B cell (primary cell): ENCODE measurements at regions of chr2 and their contacts with region 1.

Region 1: DNA sequence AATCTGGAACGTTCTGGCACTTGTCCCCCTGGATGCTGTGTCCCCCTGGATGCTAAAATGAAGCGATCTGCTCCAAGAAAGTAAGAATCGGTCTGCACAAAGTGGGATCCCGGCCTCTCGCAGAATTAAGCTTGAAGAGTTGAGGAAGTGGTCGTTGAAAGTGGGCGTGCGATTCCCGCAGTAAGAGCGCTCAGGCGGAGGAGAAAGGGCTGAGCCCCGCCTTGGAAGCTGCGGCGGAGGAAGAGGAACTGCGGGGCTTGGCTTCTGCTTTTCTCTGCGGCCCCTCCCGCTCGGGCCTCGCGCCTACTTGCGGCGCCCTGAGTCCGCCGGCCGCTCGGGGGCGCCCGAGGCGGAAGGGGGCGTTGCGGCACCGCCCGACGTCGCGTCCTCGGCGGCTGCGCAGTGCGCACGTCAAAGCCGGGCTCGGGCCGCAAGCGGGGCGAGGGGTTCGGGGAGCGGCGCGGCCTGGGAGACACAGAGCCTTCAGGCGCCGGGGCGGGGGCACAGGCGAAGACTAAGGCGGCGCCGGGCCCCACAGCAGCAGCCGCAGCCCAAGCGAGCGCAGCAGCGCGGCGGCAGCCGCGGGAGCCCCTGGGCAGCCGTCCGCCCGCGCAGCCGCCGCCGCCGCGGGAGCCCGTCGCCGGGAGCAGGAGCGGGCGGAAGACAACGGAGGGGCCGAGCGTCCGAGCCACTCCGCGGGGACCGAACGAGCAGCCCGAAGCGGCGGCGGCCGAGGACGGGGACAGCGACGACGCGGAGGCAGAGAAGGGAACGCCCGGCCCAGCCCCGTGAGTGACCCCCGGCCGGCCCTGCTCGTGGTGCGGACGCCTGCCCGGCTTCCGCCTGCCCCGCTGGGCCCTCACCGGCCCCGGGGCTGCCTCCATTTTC is at the start of gene CAB39:
- DNase-seq: peak; percentile 96
- ATAC-seq: peak; percentile 91
- H3K4me3 ChIP-seq: peak within 1 kb of the TSS; percentile 68 to 89 (median 78)
- H3K4me3 Mint-ChIP-seq: peak within 1 kb of the TSS; percentile 93
- H3K27ac ChIP-seq: peak within 1 kb of the TSS; percentile 59 to 84
- H3K27ac Mint-ChIP-seq: peak within 1 kb of the TSS; percentile 94
- H3K4me1 ChIP-seq: peaks cover 41% of the 10 kb centered on the region in 2 donors
- H3K4me1 Mint-ChIP-seq: peaks cover 48% of the 10 kb centered on the region
- H3K27me3 ChIP-seq: no peaks in the 10 kb centered on the region
- H3K27me3 Mint-ChIP-seq: no peaks in the 10 kb centered on the region
- CTCF ChIP-seq: peak; percentile 83
- total RNA-seq, gene CAB39: 72.5 and 75.7 TPM in 2 replicates

Region 2: DNA sequence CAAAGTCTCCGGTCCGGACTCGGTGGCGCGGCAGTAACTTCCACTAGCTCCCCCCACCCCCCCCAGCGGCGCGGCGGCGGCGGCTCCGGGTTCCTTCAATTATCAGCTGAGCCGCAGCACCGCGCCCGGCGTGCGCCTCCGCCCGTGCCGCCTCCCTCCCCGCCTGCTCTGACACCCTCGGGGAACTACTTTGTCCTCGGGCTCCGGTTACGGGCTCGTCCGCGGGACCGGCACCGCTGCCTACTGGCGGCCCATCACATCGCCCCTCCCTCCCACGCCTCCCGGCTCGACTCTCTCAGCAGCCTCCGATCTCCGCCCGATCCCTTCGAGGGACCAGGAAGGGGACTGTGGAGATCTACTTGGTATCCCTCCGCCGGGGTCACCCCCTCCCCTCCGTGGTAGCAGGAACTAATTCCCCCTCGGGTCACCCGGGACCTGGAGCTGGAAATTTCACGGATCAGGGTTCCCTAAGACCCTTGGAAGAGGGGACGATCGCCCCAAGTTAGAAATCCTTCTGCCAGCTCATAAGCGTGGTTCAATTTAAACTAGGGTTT is 790.7 kb before region 1 on chr2 and contains the start of gene TRIP12:
- CTCF ChIA-PET with region 1: no interaction called
- POLR2A ChIA-PET with region 1: no interaction called
- intact Hi-C with region 1: loop called (anchors 5 kb)
- DNase-seq: peak; percentile 99
- ATAC-seq: peak; percentile 75
- H3K4me3 ChIP-seq: peak within 1 kb of the TSS; percentile 83 to 98 (median 93)
- H3K4me3 Mint-ChIP-seq: peak within 1 kb of the TSS; percentile 96
- H3K27ac ChIP-seq: peak within 1 kb of the TSS; percentile 83 to 98
- H3K27ac Mint-ChIP-seq: peak within 1 kb of the TSS; percentile 97
- H3K4me1 ChIP-seq: peaks cover 20 to 24% of the 10 kb centered on the region in 2 donors
- H3K4me1 Mint-ChIP-seq: peaks cover 39% of the 10 kb centered on the region
- H3K27me3 ChIP-seq: no peaks in the 10 kb centered on the region
- H3K27me3 Mint-ChIP-seq: no peaks in the 10 kb centered on the region
- CTCF ChIP-seq: no peak
- total RNA-seq, gene TRIP12: 254 and 274 TPM in 2 replicates

Region 3: GRCh38 chr2:230202430-230203109 is 510.1 kb before region 1 on chr2:
- CTCF ChIA-PET with region 1: interaction called, 3 read pairs
- POLR2A ChIA-PET with region 1: interaction called, 3 read pairs
- intact Hi-C with region 1: loop called (anchors 5 kb)
- DNase-seq: peak; percentile 79
- ATAC-seq: peak; percentile 61
- H3K4me3 ChIP-seq: no peak overlapping the region
- H3K4me3 Mint-ChIP-seq: peak overlapping the region; percentile 74
- H3K27ac ChIP-seq: peak overlapping the region; percentile 9 to 72
- H3K27ac Mint-ChIP-seq: peak overlapping the region; percentile 87
- H3K4me1 ChIP-seq: peaks cover 51 to 55% of the 10 kb centered on the region in 2 donors
- H3K4me1 Mint-ChIP-seq: peaks cover 39% of the 10 kb centered on the region
- H3K27me3 ChIP-seq: no peaks in the 10 kb centered on the region
- H3K27me3 Mint-ChIP-seq: no peaks in the 10 kb centered on the region
- CTCF ChIP-seq: peak; percentile 64

Region 4: DNA sequence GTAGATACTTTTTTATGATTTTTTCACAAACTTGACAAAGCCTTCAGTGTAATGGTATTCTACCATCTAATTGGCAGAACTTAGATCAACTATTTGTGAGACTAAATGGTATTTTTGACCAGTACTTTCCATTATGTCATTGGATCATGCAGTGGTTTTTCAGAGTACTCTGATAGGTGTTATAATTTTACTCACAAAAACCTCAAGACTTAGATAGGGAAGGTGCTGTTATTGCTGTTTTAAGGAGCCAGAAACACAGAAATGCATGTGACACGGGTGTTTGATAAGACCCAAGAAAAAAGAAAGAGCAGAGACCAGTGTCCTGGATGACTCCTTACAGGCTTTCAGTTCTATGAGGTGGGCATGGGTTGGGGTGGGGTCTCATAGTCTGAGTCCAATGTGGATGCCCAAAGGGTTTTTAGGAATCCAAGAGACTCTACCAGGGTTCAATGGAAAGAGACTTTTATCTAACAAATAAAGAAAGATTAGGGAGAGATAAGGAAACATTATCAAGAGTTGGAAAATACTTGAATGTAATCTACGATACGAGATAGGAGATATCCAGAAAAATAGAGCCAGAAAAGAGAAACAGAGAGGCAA is 455.9 kb before region 1 on chr2:
- CTCF ChIA-PET with region 1: no interaction called
- POLR2A ChIA-PET with region 1: no interaction called
- intact Hi-C with region 1: loop called (anchors 5 kb)
- DNase-seq: no peak
- ATAC-seq: no peak
- H3K4me3 ChIP-seq: no peak overlapping the region
- H3K4me3 Mint-ChIP-seq: peak overlapping the region; percentile 68
- H3K27ac ChIP-seq: peak overlapping the region; percentile 43 to 78
- H3K27ac Mint-ChIP-seq: peak overlapping the region; percentile 83
- H3K4me1 ChIP-seq: peaks cover 20 to 26% of the 10 kb centered on the region in 2 donors
- H3K4me1 Mint-ChIP-seq: peaks cover 45% of the 10 kb centered on the region
- H3K27me3 ChIP-seq: no peaks in the 10 kb centered on the region
- H3K27me3 Mint-ChIP-seq: no peaks in the 10 kb centered on the region
- CTCF ChIP-seq: no peak

Region 5: GRCh38 chr2:230411570-230412370 is 300.9 kb before region 1 on chr2:
- CTCF ChIA-PET with region 1: no interaction called
- POLR2A ChIA-PET with region 1: no interaction called
- intact Hi-C with region 1: loop called (anchors 5 kb)
- DNase-seq: peak; percentile 81
- ATAC-seq: peak; percentile 62
- H3K4me3 ChIP-seq: peak overlapping the region; percentile 69 to 92 (median 88)
- H3K4me3 Mint-ChIP-seq: peak overlapping the region; percentile 98
- H3K27ac ChIP-seq: peak overlapping the region; percentile 88 to 92
- H3K27ac Mint-ChIP-seq: peak overlapping the region; percentile 99
- H3K4me1 ChIP-seq: peaks cover 54 to 63% of the 10 kb centered on the region in 2 donors
- H3K4me1 Mint-ChIP-seq: peaks cover 72% of the 10 kb centered on the region
- H3K27me3 ChIP-seq: no peaks in the 10 kb centered on the region
- H3K27me3 Mint-ChIP-seq: no peaks in the 10 kb centered on the region
- CTCF ChIP-seq: no peak

Region 6: GRCh38 chr2:230569298-230569697 is 143.4 kb before region 1 on chr2:
- CTCF ChIA-PET with region 1: no interaction called
- POLR2A ChIA-PET with region 1: no interaction called
- intact Hi-C with region 1: no loop called
- DNase-seq: no peak
- ATAC-seq: no peak
- H3K4me3 ChIP-seq: no peak overlapping the region
- H3K4me3 Mint-ChIP-seq: no peak overlapping the region
- H3K27ac ChIP-seq: no peak overlapping the region
- H3K27ac Mint-ChIP-seq: no peak overlapping the region
- H3K4me1 ChIP-seq: peaks cover 18% of the 10 kb centered on the region in 2 donors
- H3K4me1 Mint-ChIP-seq: peaks cover 23% of the 10 kb centered on the region
- H3K27me3 ChIP-seq: no peaks in the 10 kb centered on the region
- H3K27me3 Mint-ChIP-seq: no peaks in the 10 kb centered on the region
- CTCF ChIP-seq: no peak

Region 7: DNA sequence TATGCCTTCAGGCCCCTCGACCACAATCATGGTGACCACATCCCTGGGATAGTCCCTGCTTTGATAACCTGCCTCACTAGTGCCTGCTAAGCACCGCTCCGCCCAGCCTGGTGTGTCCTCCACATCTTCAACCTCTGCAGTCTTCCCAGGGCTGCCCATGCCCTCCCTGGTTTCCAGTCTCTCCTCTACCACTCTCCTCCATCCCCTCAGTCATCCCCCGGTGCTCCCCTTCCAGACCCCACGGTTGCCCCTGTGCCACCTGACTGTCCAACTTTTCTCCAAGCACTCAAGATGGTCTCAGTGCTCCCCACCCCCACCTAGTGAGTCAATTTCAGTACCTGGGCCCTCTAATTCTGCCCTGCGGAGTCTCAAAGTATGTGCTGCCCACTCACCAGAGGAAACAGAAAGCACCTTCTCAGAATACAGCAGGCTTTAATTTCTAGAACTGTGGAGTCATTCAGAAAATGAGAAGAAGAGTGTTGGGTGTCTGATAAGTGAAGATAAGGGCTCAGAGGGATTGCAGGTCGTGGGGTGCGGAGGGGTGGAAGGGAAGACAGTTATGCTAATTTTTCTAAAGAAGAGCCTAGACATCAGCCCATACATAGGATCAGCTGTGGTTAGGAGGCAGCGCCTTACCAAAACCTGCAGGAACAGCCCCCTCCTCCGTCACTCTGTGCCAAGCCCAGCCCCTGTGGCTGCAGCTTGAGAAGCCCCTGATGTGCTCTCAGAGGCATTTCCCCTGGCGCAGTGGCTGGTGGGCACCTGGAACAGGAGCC is 53.6 kb before region 1 on chr2:
- CTCF ChIA-PET with region 1: no interaction called
- POLR2A ChIA-PET with region 1: no interaction called
- intact Hi-C with region 1: loop called (anchors 5 kb)
- DNase-seq: peak; percentile 38
- ATAC-seq: no peak
- H3K4me3 ChIP-seq: no peak overlapping the region
- H3K4me3 Mint-ChIP-seq: peak overlapping the region; percentile 52
- H3K27ac ChIP-seq: peak overlapping the region in 1 of 2 donors; percentile 23
- H3K27ac Mint-ChIP-seq: peak overlapping the region; percentile 73
- H3K4me1 ChIP-seq: peaks cover 55 to 67% of the 10 kb centered on the region in 2 donors
- H3K4me1 Mint-ChIP-seq: peaks cover 69% of the 10 kb centered on the region
- H3K27me3 ChIP-seq: no peaks in the 10 kb centered on the region
- H3K27me3 Mint-ChIP-seq: no peaks in the 10 kb centered on the region
- CTCF ChIP-seq: no peak

Region 8: GRCh38 chr2:231056453-231057424 is 344.1 kb after region 1 on chr2 and contains the start of gene PSMD1:
- CTCF ChIA-PET with region 1: no interaction called
- POLR2A ChIA-PET with region 1: no interaction called
- intact Hi-C with region 1: loop called (anchors 5 kb)
- DNase-seq: peak; percentile 98
- ATAC-seq: peak; percentile 87
- H3K4me3 ChIP-seq: peak within 1 kb of the TSS; percentile 75 to 99 (median 90)
- H3K4me3 Mint-ChIP-seq: peak within 1 kb of the TSS; percentile 100
- H3K27ac ChIP-seq: peak within 1 kb of the TSS; percentile 85 to 86
- H3K27ac Mint-ChIP-seq: peak within 1 kb of the TSS; percentile 100
- H3K4me1 ChIP-seq: peaks cover 22 to 27% of the 10 kb centered on the region in 2 donors
- H3K4me1 Mint-ChIP-seq: peaks cover 39% of the 10 kb centered on the region
- H3K27me3 ChIP-seq: peaks cover 0 to 6% (median 0%) of the 10 kb centered on the region in 4 experiments
- H3K27me3 Mint-ChIP-seq: peaks cover 16% of the 10 kb centered on the region
- CTCF ChIP-seq: peak; percentile 91
- total RNA-seq, gene PSMD1: 45.4 and 48.2 TPM in 2 replicates